ENCODE measurements at regions of chr4 and their contacts with region 1.

Region 1: DNA sequence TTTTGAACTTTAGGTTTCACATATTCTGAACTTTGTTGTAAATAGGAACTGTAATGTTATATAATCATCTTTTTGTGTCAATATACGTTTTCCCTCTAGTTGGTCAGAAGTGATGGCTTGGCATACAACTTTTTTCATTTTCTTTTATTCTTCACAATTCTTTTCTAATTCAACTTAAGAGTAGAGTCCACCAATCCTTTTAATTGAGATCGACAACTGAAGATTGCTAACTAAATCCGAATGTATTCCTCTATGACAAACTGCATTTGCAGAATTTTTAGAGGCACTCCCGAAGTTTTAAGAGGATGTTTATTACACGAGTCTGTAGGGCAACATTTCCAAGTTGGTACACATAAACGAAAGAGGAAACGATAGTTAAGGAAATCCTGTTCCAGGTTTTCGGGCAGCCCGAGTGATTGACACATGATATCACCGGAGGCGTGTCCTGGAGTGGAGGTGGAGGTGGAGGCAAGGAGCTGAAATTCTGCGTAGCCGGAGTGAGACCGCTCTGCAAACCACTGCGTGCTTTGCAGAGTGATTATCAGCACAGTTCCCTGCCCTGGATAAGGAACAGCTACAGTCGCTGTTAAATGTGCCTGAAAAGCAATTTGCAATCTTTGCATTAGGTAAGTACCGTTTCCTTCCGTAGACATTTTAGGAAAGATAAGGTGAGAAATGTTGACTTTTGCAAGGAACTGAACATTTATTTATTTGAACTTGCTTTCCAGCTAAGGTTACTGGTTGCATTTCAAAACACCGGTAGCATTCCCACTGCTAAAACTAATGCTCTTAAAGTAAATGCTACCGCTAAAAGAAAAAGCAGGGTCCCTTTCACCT is at the start of gene SPRY1:
- DNase-seq: peak; percentile 55 to 94
- H3K4me3 ChIP-seq: peak within 1 kb of the TSS; percentile 78 to 84
- H3K27ac ChIP-seq: peak within 1 kb of the TSS; percentile 84 to 93
- H3K4me1 ChIP-seq: no peaks in the 10 kb centered on the region
- H3K27me3 ChIP-seq: no peaks in the 10 kb centered on the region
- CTCF ChIP-seq: no peak
- total RNA-seq, gene SPRY1: 348 TPM

Region 2: DNA sequence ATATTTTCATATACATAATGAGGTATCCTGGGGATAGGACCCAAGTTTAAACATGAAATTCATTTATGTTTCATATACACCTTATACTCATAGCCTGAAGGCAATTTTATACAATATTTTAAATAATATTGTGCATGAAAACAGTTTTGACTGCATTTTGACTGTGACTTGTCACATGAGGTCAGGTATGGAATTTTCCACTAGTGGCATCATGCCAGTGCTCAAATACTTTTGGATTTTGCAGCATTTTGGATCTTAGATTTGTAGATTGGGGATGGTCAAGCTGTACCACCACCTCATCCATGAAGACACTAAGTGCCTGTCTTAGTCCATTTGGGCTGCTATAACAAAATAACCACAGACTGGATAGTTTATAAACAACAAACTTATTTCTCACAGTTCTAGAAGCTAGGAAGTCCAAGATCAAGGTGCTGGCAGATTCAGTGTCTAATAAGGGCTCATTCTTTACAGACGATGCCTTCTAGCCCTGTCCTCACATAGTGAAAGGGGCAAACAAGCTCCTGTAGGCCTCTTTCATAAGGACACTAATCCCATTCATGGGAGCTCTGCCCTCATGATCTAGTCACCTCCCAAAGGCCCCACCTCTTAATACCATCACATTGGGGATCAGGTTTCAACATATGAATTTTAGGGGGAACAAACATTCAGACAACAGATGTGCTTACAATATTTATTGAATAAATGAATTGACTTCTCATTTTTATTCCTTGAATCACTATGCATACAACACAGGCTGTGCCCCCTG is 483.5 kb before region 1 on chr4:
- intact Hi-C with region 1: no loop called
- DNase-seq: no peak
- H3K4me3 ChIP-seq: no peak overlapping the region
- H3K27ac ChIP-seq: no peak overlapping the region
- H3K4me1 ChIP-seq: no peaks in the 10 kb centered on the region
- H3K27me3 ChIP-seq: no peaks in the 10 kb centered on the region
- CTCF ChIP-seq: no peak

Region 3: GRCh38 chr4:123555233-123555806 is 158.8 kb after region 1 on chr4:
- intact Hi-C with region 1: loop called (anchors 2 kb)
- DNase-seq: peak; percentile 21 to 94
- H3K4me3 ChIP-seq: peak overlapping the region in 1 of 2 donors; percentile 56
- H3K27ac ChIP-seq: peak overlapping the region; percentile 83 to 87
- H3K4me1 ChIP-seq: peaks cover 3 to 34% of the 10 kb centered on the region in 2 donors
- H3K27me3 ChIP-seq: no peaks in the 10 kb centered on the region
- CTCF ChIP-seq: no peak

Region 4: DNA sequence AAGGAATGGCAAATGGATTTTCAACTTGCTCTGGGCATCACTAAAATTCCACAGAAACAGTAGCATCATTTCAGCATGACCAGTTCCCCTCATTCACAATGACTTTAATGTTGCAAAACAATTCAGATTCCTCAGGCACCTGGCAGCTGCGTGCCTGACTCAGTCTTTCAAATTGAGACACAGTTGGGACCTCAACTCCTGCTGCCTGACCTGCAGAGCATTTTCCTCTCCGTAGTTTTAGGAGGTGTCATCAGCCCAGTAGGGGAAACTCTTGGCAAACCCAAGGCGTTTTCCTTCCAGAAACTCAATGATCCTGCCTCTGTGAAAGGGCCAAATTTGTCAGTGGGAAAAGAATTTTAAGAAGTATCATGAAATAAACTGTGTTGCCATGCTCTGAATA is 389.0 kb after region 1 on chr4:
- intact Hi-C with region 1: loop called (anchors 5 kb)
- DNase-seq: peak in 1 of 2 donors; percentile 91
- H3K4me3 ChIP-seq: no peak overlapping the region
- H3K27ac ChIP-seq: peak overlapping the region; percentile 71 to 72
- H3K4me1 ChIP-seq: peaks cover 7 to 26% of the 10 kb centered on the region in 2 donors
- H3K27me3 ChIP-seq: no peaks in the 10 kb centered on the region
- CTCF ChIP-seq: no peak

Region 5: GRCh38 chr4:124111922-124112321 is 715.4 kb after region 1 on chr4:
- intact Hi-C with region 1: loop called (anchors 5 kb)
- DNase-seq: no peak
- H3K4me3 ChIP-seq: no peak overlapping the region
- H3K27ac ChIP-seq: no peak overlapping the region
- H3K4me1 ChIP-seq: no peaks in the 10 kb centered on the region
- H3K27me3 ChIP-seq: no peaks in the 10 kb centered on the region
- CTCF ChIP-seq: peak; percentile 43 to 65 (median 52)

Measured in ascending aorta (tissue), 2 donors.